ENCODE measurements at regions of chr16 and their contacts with region 1.

Region 1: GRCh38 chr16:48734220-48734859 is 124.4 kb upstream of the N4BP1 start:
- DNase-seq: no peak
- ATAC-seq: no peak
- H3K4me3 ChIP-seq: no peak overlapping the region
- H3K27ac ChIP-seq: no peak overlapping the region
- H3K4me1 ChIP-seq: no peaks in the 10 kb centered on the region
- H3K27me3 ChIP-seq: no peaks in the 10 kb centered on the region
- CTCF ChIP-seq: no peak
- EP300 ChIP-seq: no peak
- POLR2A ChIP-seq: no peak
- RAD21 ChIP-seq: no peak

Region 2: DNA sequence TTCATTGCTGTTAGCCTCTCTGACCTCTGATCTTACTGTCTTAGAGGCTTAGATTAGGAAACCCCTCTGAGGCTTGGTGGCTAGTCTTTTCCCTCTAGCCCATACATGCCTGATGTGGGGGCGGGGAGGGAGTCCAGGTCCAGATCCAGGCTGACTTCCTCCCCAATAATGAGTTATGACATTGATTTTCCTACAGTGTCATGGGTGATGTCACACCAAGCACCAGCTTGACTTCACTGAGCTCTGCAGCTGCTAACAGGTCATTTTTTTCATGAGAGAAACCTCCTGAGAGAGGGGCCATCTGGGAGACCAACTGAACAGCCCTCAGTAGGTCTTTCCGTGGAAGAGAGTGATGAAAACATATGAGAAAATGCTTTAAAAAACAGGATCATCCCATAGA is 55.8 kb after region 1 on chr16:
- CTCF ChIA-PET with region 1: no interaction called
- POLR2A ChIA-PET with region 1: no interaction called
- in situ Hi-C with region 1: loop called (anchors 10 kb)
- intact Hi-C with region 1: no loop called
- DNase-seq: no peak
- ATAC-seq: no peak
- H3K4me3 ChIP-seq: no peak overlapping the region
- H3K27ac ChIP-seq: no peak overlapping the region
- H3K4me1 ChIP-seq: no peaks in the 10 kb centered on the region
- H3K27me3 ChIP-seq: no peaks in the 10 kb centered on the region
- CTCF ChIP-seq: no peak
- EP300 ChIP-seq: no peak
- POLR2A ChIP-seq: no peak
- RAD21 ChIP-seq: no peak